H1 (cell line): ENCODE measurements at regions of chr6 and their contacts with region 1.

Region 1: GRCh38 chr6:73388800-73389512 is 5.7 kb upstream of the DDX43 start:
- DNase-seq: peak; percentile 77 to 82
- H3K4me3 ChIP-seq: peak overlapping the region; percentile 28 to 68 (median 58)
- H3K27ac ChIP-seq: 0 out of 2 replicates have a peak overlapping the region, but pooled peaks have one; percentile 27
- H3K4me1 ChIP-seq: peaks cover 0 to 6% (median 0%) of the 10 kb centered on the region in 4 experiments; a peak in 3 of 7 replicates
- H3K27me3 ChIP-seq: no peaks in the 10 kb centered on the region
- CTCF ChIP-seq: peak; percentile 89 to 94 (median 90)
- EP300 ChIP-seq: no peak
- POLR2A ChIP-seq: peak in 1 of 2 experiments; percentile 74; a peak in 1 of 3 replicates
- RAD21 ChIP-seq: peak; percentile 94

Region 2: GRCh38 chr6:73285674-73286283 is 103.2 kb before region 1 on chr6:
- CTCF ChIA-PET with region 1: interaction called, 19 read pairs
- POLR2A ChIA-PET with region 1: interaction called, 8 read pairs
- DNase-seq: no peak
- H3K4me3 ChIP-seq: no peak overlapping the region
- H3K27ac ChIP-seq: no peak overlapping the region
- H3K4me1 ChIP-seq: no peaks in the 10 kb centered on the region
- H3K27me3 ChIP-seq: no peaks in the 10 kb centered on the region
- CTCF ChIP-seq: peak in 2 of 3 experiments; percentile 46 to 47; a peak in 2 of 4 replicates
- EP300 ChIP-seq: no peak
- POLR2A ChIP-seq: no peak
- RAD21 ChIP-seq: peak; percentile 63 to 72

Region 3: GRCh38 chr6:73339347-73339746 is 49.6 kb before region 1 on chr6:
- CTCF ChIA-PET with region 1: interaction called, 12 read pairs
- POLR2A ChIA-PET with region 1: interaction called, 4 read pairs
- DNase-seq: peak in 1 of 2 experiments; percentile 48
- H3K4me3 ChIP-seq: no peak overlapping the region
- H3K27ac ChIP-seq: no peak overlapping the region
- H3K4me1 ChIP-seq: no peaks in the 10 kb centered on the region
- H3K27me3 ChIP-seq: no peaks in the 10 kb centered on the region
- CTCF ChIP-seq: no peak
- EP300 ChIP-seq: no peak
- POLR2A ChIP-seq: no peak
- RAD21 ChIP-seq: no peak

Region 4: GRCh38 chr6:73349311-73349710 is 39.6 kb before region 1 on chr6:
- CTCF ChIA-PET with region 1: interaction called, 7 read pairs
- POLR2A ChIA-PET with region 1: interaction called, 13 read pairs
- DNase-seq: peak in 1 of 2 experiments; percentile 78
- H3K4me3 ChIP-seq: peak overlapping the region in 1 of 4 experiments; percentile 39; a peak in 2 of 8 replicates
- H3K27ac ChIP-seq: 0 out of 2 replicates have a peak overlapping the region, but pooled peaks have one; percentile 37
- H3K4me1 ChIP-seq: peaks cover 8 to 22% (median 15%) of the 10 kb centered on the region in 4 experiments
- H3K27me3 ChIP-seq: no peaks in the 10 kb centered on the region; a peak in 1 of 7 replicates
- CTCF ChIP-seq: no peak
- EP300 ChIP-seq: peak in 1 of 2 experiments; percentile 96; a peak in 2 of 3 replicates
- POLR2A ChIP-seq: no peak
- RAD21 ChIP-seq: no peak

Region 5: GRCh38 chr6:73409395-73409794 is 20.4 kb after region 1 on chr6:
- CTCF ChIA-PET with region 1: no interaction called
- POLR2A ChIA-PET with region 1: no interaction called
- DNase-seq: no peak
- H3K4me3 ChIP-seq: no peak overlapping the region
- H3K27ac ChIP-seq: no peak overlapping the region
- H3K4me1 ChIP-seq: no peaks in the 10 kb centered on the region
- H3K27me3 ChIP-seq: no peaks in the 10 kb centered on the region
- CTCF ChIP-seq: no peak
- EP300 ChIP-seq: no peak
- POLR2A ChIP-seq: no peak
- RAD21 ChIP-seq: no peak

Region 6: GRCh38 chr6:73566954-73567591 is 178.1 kb after region 1 on chr6:
- CTCF ChIA-PET with region 1: no interaction called
- POLR2A ChIA-PET with region 1: no interaction called
- DNase-seq: no peak
- H3K4me3 ChIP-seq: no peak overlapping the region
- H3K27ac ChIP-seq: no peak overlapping the region
- H3K4me1 ChIP-seq: peaks cover 3 to 14% (median 10%) of the 10 kb centered on the region in 4 experiments; a peak in 5 of 7 replicates
- H3K27me3 ChIP-seq: no peaks in the 10 kb centered on the region
- CTCF ChIP-seq: no peak
- EP300 ChIP-seq: no peak
- POLR2A ChIP-seq: no peak
- RAD21 ChIP-seq: no peak